ENCODE measurements at regions of chr17 and their contacts with region 1.

Region 1: GRCh38 chr17:31015639-31016038 is 44.8 kb downstream of the RNF135 start:
- DNase-seq: no peak

Region 2: DNA sequence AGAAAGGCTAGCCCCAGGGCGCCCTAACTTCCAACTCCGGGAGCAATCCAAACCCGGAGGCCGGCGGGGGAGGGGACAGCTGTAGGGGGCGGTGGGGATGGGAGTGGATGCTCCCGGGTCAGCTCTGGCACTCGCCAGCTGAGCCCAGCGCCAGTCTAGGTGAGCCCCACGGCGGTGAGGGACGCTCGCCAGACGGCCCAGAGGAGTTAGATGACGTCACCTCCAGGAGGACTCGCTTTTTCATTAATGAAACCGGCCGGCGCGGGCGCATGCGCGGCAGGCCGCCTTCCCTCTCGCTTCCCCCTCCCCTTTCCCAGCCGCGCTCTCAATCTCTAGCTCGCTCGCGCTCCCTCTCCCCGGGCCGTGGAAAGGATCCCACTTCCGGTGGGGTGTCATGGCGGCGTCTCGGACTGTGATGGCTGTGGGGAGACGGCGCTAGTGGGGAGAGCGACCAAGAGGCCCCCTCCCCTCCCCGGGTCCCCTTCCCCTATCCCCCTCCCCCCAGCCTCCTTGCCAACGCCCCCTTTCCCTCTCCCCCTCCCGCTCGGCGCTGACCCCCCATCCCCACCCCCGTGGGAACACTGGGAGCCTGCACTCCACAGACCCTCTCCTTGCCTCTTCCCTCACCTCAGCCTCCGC is 79.1 kb after region 1 on chr17 and contains the start of gene NF1:
- intact Hi-C with region 1: loop called (anchors 10 kb)
- DNase-seq: peak; percentile 90 to 99 (median 94)

Region 3: DNA sequence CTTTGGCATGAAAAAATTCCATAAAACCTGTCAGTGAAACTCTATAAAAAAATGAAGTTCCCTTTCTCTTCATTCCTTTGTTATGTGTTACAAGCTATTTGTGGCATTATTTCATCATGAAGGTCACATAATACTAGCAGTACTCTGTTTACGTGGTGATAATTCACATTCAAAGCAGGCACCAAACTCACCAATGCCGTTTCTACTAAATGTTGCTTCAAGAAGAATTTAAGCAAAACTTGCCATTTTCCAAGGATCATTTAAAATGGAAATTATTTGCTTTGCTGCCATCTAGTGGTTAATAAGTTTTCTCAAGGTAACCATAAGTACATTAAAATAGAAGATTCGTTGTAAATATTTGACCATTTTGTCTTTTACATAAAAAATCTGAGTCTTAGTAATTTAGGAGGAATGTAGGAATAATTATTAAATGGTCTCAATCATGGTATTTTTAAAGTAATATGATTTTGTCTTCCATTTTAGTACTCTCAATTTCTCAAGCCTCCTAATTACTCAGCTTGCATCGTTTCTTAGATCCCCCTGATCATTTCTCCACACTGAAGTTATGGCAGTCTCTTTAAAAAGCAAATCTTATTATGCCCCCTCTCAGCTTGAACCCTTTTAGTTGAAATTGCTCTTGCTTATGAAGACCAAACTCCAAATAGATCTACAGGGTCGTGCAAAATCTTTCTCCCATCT is 200.6 kb after region 1 on chr17:
- intact Hi-C with region 1: loop called (anchors 5 kb)
- DNase-seq: no peak

Region 4: DNA sequence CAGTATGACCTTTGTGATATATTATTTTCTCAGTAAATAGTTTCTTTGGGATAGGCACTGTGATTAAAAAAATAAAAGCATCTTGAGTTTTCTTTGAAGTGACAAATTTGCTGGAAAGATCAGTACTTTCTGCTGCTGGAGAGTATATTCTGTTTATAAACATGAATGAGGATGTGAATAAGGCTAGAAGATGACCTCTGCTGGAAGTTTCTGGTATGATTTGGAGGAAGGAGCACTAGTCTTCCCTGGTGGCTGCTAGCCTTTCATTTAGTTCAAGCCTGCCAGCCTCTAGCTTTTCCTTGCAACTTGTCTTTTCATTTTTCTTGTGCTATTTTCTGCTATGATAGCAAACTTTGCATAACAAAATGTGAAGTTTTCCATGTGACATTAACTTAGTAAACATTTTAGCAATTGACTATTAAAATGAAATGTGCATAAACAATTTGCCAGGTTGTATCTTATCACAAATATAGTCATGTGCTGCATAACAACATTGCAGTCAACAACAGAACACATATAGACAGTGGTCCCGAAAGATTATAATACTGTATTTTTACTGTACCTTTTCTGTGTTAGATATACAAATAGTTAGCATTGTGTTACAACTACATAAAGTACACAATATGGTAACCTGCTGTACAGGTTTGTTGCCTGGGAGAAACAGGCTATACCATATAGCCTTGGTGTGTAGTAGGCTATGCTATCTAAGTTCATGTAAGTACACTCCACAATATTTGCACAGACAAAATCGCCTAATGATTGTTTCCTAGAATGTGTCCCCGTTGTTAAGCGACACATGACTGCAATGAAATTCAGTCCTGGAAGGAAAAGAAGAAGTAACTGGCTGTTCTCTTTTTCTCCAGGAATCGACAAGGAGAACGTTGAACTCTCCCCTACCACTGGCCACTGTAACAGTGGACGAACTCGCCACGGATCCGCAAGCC is 357.8 kb after region 1 on chr17:
- intact Hi-C with region 1: loop called (anchors 5 kb)
- DNase-seq: no peak

Measured in posterior cingulate gyrus (tissue), 11 donors.